CD4-positive, alpha-beta memory T cell (primary cell): ENCODE measurements at regions of chr4 and their contacts with region 1.

Region 1: DNA sequence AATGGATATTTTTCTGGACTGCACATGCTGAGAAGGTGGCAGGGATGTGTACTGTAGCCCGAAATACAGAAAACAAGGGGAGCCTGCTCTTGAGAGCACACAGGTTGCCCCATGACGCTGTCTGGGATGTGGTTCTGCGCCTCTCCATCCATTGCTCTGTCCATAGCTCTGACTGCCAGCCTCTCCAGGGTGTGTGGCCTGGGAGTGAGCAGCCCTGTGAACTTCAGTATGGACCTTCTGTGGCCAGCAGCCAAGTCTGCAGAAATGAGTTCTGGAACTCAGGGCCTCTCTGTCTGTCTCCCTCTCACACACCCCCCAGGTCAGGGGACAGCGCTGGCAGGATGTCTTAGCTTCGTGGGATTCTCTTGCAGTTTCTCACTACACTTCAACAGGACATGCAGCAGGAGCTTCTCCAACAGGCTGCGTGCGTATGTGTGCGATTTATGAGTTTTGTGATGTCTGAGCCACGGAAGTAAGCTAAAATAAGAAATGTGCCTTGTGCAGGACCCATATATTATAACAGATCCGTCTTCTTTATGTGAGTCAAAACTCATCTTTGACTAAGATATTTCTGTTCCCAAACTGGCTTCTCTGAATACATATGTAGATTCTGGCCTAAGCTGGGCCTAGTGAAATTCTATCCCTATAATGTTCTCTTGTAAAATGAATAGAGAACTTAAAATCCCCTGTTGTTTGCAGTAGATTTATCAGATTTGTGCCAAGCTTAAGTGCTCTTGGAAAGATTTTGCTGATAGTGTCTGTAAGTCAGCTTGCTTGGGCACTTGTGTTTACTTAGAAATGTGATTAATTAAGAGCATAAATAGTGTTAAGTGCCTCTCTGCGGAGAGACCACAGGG is 40.0 kb downstream of the PROM1 start:
- DNase-seq: no peak
- H3K4me3 ChIP-seq: no peak overlapping the region
- H3K4me3 Mint-ChIP-seq: no peak overlapping the region
- H3K27ac ChIP-seq: no peak overlapping the region
- H3K27ac Mint-ChIP-seq: no peak overlapping the region
- H3K4me1 ChIP-seq: no peaks in the 10 kb centered on the region
- H3K4me1 Mint-ChIP-seq: no peaks in the 10 kb centered on the region
- H3K27me3 ChIP-seq: no peaks in the 10 kb centered on the region
- H3K27me3 Mint-ChIP-seq: peaks cover 5% of the 10 kb centered on the region in 2 donors

Region 2: GRCh38 chr4:16075975-16076757 is 32.3 kb after region 1 on chr4:
- CTCF ChIA-PET with region 1: no interaction called
- POLR2A ChIA-PET with region 1: no interaction called
- intact Hi-C with region 1: loop called (anchors 1 kb)
- DNase-seq: no peak
- H3K4me3 ChIP-seq: no peak overlapping the region
- H3K4me3 Mint-ChIP-seq: no peak overlapping the region
- H3K27ac ChIP-seq: no peak overlapping the region
- H3K27ac Mint-ChIP-seq: no peak overlapping the region
- H3K4me1 ChIP-seq: no peaks in the 10 kb centered on the region
- H3K4me1 Mint-ChIP-seq: no peaks in the 10 kb centered on the region
- H3K27me3 ChIP-seq: peaks cover 4% of the 10 kb centered on the region
- H3K27me3 Mint-ChIP-seq: peaks cover 27 to 35% of the 10 kb centered on the region in 2 donors